ENCODE measurements at regions of chr2 and their contacts with region 1.

Region 1: GRCh38 chr2:12716282-12717190 is at the start of gene TRIB2:
- DNase-seq: peak; percentile 77 to 89
- ATAC-seq: peak; percentile 61 to 71
- H3K4me3 ChIP-seq: peak within 1 kb of the TSS; percentile 83 to 97 (median 93)
- H3K27ac ChIP-seq: peak within 1 kb of the TSS; percentile 92 to 96 (median 95)
- H3K4me1 ChIP-seq: peaks cover 36 to 39% of the 10 kb centered on the region in 2 donors
- H3K27me3 ChIP-seq: no peaks in the 10 kb centered on the region
- CTCF ChIP-seq: peak in 1 of 5 experiments; percentile 28
- POLR2A ChIP-seq: peak; percentile 73 to 88
- total RNA-seq, gene TRIB2: 12.6 to 18.5 (median 15.9) TPM

Region 2: DNA sequence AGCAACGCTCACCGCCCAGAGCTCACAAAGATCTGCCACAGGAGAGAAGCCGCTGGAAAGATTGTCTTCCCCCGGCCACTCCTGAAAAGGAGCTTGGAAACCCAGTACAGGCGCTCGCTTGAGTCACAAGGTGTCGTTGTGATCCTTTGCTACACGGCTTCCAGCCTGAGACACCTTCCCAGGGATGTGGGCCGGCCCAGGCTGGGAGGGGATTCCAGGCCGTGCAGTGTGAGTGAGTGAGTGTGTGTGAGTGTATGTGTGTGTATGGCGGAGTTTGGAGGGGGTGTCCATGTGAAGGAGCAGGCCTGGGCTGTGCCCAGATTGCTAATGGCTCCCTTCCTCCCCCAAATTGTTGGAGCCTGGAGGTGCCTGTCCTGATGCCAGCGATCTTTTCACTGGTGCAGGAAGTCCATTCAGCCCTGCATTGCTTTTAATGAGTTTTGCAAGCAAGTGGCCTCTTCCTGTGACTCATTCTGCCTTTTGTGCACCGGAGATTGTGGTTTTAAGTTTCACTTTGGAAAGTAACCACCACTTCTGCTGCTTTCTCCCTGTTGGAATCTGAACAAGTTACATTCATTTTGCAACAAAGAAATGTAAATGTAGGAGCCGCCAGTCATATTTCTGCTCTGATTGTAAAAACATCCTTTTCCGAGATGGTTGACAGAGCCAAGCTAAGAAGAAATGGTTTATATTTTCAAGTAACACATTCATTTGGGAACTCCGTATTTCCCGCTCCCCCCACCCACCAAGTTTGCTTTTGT is 886.4 kb before region 1 on chr2:
- in situ Hi-C with region 1: no loop called
- intact Hi-C with region 1: loop called (anchors 1 kb)
- DNase-seq: peak; percentile 66 to 69
- ATAC-seq: peak; percentile 74 to 85
- H3K4me3 ChIP-seq: peak overlapping the region in 3 of 4 donors; percentile 23 to 37 (median 33)
- H3K27ac ChIP-seq: peak overlapping the region; percentile 70 to 79 (median 72)
- H3K4me1 ChIP-seq: peaks cover 22 to 29% of the 10 kb centered on the region in 2 donors
- H3K27me3 ChIP-seq: no peaks in the 10 kb centered on the region
- CTCF ChIP-seq: no peak
- POLR2A ChIP-seq: no peak

Region 3: DNA sequence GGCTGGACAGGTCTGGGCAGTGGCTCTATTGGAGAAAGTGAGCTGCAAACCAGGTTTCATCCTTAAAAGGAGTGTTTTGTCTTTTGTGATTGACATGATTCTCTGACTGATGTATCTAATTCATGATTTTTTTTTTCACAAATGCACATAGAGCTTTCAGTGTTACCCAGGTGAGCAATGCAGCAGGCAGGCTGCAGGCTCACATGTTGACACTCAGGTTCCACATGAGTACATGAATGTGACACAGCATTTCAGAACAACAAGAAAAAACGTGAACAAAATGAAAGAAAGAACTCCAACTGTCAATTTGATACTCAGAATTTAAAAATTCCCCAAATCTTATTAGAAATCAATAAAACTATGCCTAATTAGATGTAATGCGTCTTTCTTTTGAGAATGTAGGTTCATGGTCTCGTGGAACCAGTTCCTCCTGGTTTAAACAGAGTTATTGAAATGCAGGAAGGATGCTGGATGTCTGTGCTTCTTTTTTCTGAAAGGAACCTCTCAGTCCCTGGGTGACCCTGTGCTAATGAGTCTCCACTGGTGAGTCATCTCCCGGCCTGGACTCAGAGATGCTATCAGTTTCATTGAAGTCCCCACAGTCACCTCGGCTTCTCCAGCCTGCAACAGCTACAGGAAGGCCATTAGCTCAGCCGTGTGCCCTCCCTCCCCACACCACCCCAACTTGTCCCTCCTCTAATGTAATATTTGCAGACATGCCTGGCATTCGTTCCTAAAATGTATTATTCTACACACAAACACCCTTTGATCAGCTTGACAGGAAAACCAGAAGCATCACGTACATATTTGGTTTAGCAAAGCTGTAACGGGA is 539.7 kb before region 1 on chr2:
- in situ Hi-C with region 1: no loop called
- intact Hi-C with region 1: loop called (anchors 10 kb)
- DNase-seq: peak; percentile 24 to 59
- ATAC-seq: peak; percentile 89 to 93
- H3K4me3 ChIP-seq: no peak overlapping the region
- H3K27ac ChIP-seq: peak overlapping the region in 3 of 4 donors; percentile 12 to 43 (median 41)
- H3K4me1 ChIP-seq: peaks cover 15 to 16% of the 10 kb centered on the region in 2 donors
- H3K27me3 ChIP-seq: no peaks in the 10 kb centered on the region
- CTCF ChIP-seq: no peak
- POLR2A ChIP-seq: no peak

Region 4: DNA sequence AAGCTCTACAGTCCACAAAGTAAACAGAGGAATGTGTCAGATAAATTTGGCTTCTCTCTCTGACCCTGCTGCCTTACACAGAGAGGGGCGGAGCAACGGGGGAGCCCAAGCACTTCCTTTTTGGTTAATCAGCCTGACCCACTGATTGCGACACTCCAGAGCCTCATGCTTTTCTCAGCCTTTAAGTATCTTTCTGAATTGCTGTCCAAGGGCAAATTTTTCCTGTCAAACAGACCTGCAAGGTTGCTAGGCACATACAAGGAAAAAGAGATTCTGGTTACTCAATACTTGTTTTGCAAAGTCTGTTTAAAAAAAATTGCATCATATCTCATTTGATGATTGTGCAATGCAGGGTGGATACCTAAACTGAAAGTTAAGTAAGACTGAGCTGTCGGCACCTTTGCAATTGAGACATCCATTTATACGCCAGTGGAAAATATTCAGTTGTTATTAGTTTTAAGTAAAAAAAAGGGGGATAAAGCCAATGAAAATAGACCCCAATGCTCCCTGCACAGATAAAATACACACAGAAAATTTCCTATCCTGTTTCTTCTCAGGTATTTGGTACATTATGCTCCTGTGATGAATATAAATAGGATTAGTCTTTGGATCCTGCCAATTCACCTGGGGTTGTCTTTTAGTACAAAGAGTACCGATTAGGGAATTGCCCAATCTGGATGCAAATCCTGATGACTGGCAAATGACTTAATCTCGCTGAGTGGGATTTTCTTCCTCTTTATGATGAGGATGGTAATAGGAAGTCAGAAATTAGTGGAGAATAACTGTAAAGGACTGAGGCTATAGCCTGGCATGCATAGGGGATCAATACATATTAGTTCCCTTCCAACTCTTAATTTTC is 260.0 kb before region 1 on chr2:
- in situ Hi-C with region 1: loop called in 1 of 4 experiments (anchors 25 kb)
- intact Hi-C with region 1: loop called (anchors 5 kb)
- DNase-seq: peak; percentile 88 to 92
- ATAC-seq: peak; percentile 85 to 88
- H3K4me3 ChIP-seq: peak overlapping the region; percentile 18 to 26 (median 20)
- H3K27ac ChIP-seq: peak overlapping the region; percentile 60 to 82 (median 66)
- H3K4me1 ChIP-seq: peaks cover 18 to 32% of the 10 kb centered on the region in 2 donors
- H3K27me3 ChIP-seq: no peaks in the 10 kb centered on the region
- CTCF ChIP-seq: peak in 1 of 5 experiments; percentile 17
- POLR2A ChIP-seq: no peak

Region 5: DNA sequence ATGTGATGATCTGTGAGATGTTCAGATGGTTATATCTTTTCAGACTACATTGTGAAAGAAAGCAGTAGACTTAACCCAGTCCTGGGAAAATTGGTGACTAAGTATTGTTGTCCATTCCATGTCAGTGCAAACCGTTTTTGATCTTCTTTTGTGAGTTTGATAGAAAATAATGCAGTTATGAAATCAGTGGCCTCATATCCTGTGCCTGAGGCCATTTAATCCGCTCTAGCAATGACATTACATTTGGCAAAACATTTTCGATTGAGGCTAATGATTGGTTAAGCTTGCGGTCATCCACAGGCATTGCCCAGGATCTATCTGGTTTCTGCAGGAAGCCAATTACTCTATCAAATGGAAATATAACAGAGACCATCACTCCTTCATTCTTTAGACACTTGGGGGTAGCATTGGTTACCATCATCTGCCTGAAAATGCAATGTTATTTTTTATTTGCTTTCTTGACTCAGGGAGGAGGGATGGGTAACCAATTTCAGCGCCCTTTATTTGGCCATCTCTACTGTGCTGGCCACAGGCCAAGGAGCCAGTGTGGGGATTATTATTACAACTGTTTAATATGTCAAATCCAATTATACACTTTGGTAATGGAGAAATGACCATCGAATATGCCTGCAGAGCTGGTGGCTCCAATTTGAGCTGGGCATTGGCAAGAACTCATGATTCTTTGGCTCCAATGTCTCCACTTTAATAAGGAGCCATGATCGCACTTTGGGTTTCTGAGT is 33.8 kb after region 1 on chr2:
- in situ Hi-C with region 1: no loop called
- intact Hi-C with region 1: no loop called
- DNase-seq: no peak
- ATAC-seq: no peak
- H3K4me3 ChIP-seq: no peak overlapping the region
- H3K27ac ChIP-seq: no peak overlapping the region
- H3K4me1 ChIP-seq: peaks cover 0 to 8% of the 10 kb centered on the region in 2 donors
- H3K27me3 ChIP-seq: no peaks in the 10 kb centered on the region
- CTCF ChIP-seq: no peak
- POLR2A ChIP-seq: no peak

Region 6: GRCh38 chr2:12931186-12931844 is 214.8 kb after region 1 on chr2:
- in situ Hi-C with region 1: loop called in 3 of 4 experiments (anchors 10 kb)
- intact Hi-C with region 1: loop called (anchors 1 kb)
- DNase-seq: no peak
- ATAC-seq: peak; percentile 66 to 76
- H3K4me3 ChIP-seq: no peak overlapping the region
- H3K27ac ChIP-seq: no peak overlapping the region
- H3K4me1 ChIP-seq: peaks cover 0 to 4% of the 10 kb centered on the region in 2 donors
- H3K27me3 ChIP-seq: no peaks in the 10 kb centered on the region
- CTCF ChIP-seq: peak; percentile 62 to 88 (median 73)
- POLR2A ChIP-seq: no peak